Activated CD4-positive, alpha-beta memory T cell treated with anti-CD3 and anti-CD28 coated beads, Interleukin-2, amount 10 ng/mL, durations not matched to agents 7 days and 5 days (primary cell): ENCODE measurements at regions of chr20 and their contacts with region 1.

Region 1: GRCh38 chr20:62937366-62938104 is 412 bp upstream of the GID8 start:
- DNase-seq: peak; percentile 98
- H3K4me3 Mint-ChIP-seq: peak overlapping the region; percentile 99
- H3K27ac Mint-ChIP-seq: peak overlapping the region; percentile 94
- H3K4me1 Mint-ChIP-seq: peaks cover 40% of the 10 kb centered on the region
- H3K27me3 Mint-ChIP-seq: no peaks in the 10 kb centered on the region

Region 2: GRCh38 chr20:62755817-62756724 is 181.5 kb before region 1 on chr20:
- CTCF ChIA-PET with region 1: no interaction called
- POLR2A ChIA-PET with region 1: no interaction called
- DNase-seq: no peak
- H3K4me3 Mint-ChIP-seq: no peak overlapping the region
- H3K27ac Mint-ChIP-seq: no peak overlapping the region
- H3K4me1 Mint-ChIP-seq: no peaks in the 10 kb centered on the region
- H3K27me3 Mint-ChIP-seq: peaks cover 25% of the 10 kb centered on the region

Region 3: DNA sequence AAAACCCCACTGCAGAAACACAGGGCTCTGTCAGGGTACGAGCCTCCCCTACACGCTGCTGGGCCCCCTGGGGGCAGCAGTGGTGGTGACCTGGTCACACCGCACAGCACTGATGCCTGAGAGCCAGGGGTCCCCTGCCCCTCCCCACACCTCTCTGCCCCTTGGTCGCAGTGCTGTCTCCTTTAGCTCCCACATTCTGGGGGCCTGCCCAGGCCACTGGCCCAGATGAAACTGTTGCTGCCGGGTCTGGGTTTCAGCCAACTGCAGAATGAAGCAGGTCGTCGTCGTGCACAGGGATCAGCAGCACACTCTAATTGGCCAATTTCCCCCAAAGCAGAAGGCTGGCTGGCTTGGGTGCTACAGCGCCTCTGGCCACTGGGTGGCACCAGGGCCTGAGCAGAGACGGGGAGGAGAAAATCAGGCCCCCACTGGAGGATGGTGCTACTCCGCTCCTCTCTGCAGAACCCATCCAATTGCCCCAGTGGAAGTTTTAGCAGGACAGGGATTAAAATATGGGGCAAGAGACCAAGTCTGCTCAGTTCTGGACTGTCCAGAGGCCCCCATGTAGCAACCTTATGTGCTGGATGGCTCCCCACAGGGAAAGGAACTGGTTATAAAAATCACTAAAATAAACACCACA is 37.4 kb before region 1 on chr20:
- CTCF ChIA-PET with region 1: no interaction called
- POLR2A ChIA-PET with region 1: interaction called, 16 read pairs
- DNase-seq: peak; percentile 78
- H3K4me3 Mint-ChIP-seq: no peak overlapping the region
- H3K27ac Mint-ChIP-seq: peak overlapping the region; percentile 76
- H3K4me1 Mint-ChIP-seq: peaks cover 44% of the 10 kb centered on the region
- H3K27me3 Mint-ChIP-seq: no peaks in the 10 kb centered on the region

Region 4: GRCh38 chr20:62907384-62908317 is 29.9 kb before region 1 on chr20:
- CTCF ChIA-PET with region 1: interaction called, 13 read pairs
- POLR2A ChIA-PET with region 1: interaction called, 9 read pairs
- DNase-seq: no peak
- H3K4me3 Mint-ChIP-seq: no peak overlapping the region
- H3K27ac Mint-ChIP-seq: no peak overlapping the region
- H3K4me1 Mint-ChIP-seq: peaks cover 22% of the 10 kb centered on the region
- H3K27me3 Mint-ChIP-seq: no peaks in the 10 kb centered on the region

Region 5: GRCh38 chr20:62921119-62921687 is 16.3 kb before region 1 on chr20:
- CTCF ChIA-PET with region 1: interaction called, 14 read pairs
- POLR2A ChIA-PET with region 1: interaction called, 230 read pairs
- DNase-seq: peak; percentile 71
- H3K4me3 Mint-ChIP-seq: peak overlapping the region; percentile 58
- H3K27ac Mint-ChIP-seq: peak overlapping the region; percentile 81
- H3K4me1 Mint-ChIP-seq: peaks cover 83% of the 10 kb centered on the region
- H3K27me3 Mint-ChIP-seq: no peaks in the 10 kb centered on the region

Region 6: GRCh38 chr20:62926239-62927104 is 11.1 kb before region 1 on chr20 and contains the start of gene DIDO1:
- CTCF ChIA-PET with region 1: interaction called, 16 read pairs
- POLR2A ChIA-PET with region 1: interaction called, 230 read pairs
- DNase-seq: peak; percentile 90
- H3K4me3 Mint-ChIP-seq: peak within 1 kb of the TSS; percentile 96
- H3K27ac Mint-ChIP-seq: peak within 1 kb of the TSS; percentile 97
- H3K4me1 Mint-ChIP-seq: peaks cover 77% of the 10 kb centered on the region
- H3K27me3 Mint-ChIP-seq: no peaks in the 10 kb centered on the region
- total RNA-seq, gene DIDO1: 62.2 to 66.2 TPM

Region 7: GRCh38 chr20:62953839-62954703 is 16.5 kb after region 1 on chr20:
- CTCF ChIA-PET with region 1: no interaction called
- POLR2A ChIA-PET with region 1: interaction called, 24 read pairs
- DNase-seq: peak; percentile 75
- H3K4me3 Mint-ChIP-seq: peak overlapping the region; percentile 66
- H3K27ac Mint-ChIP-seq: peak overlapping the region; percentile 87
- H3K4me1 Mint-ChIP-seq: peaks cover 29% of the 10 kb centered on the region
- H3K27me3 Mint-ChIP-seq: no peaks in the 10 kb centered on the region